Endothelial cell of umbilical vein (primary cell): ENCODE measurements at regions of chr16 and their contacts with region 1.

Region 1: DNA sequence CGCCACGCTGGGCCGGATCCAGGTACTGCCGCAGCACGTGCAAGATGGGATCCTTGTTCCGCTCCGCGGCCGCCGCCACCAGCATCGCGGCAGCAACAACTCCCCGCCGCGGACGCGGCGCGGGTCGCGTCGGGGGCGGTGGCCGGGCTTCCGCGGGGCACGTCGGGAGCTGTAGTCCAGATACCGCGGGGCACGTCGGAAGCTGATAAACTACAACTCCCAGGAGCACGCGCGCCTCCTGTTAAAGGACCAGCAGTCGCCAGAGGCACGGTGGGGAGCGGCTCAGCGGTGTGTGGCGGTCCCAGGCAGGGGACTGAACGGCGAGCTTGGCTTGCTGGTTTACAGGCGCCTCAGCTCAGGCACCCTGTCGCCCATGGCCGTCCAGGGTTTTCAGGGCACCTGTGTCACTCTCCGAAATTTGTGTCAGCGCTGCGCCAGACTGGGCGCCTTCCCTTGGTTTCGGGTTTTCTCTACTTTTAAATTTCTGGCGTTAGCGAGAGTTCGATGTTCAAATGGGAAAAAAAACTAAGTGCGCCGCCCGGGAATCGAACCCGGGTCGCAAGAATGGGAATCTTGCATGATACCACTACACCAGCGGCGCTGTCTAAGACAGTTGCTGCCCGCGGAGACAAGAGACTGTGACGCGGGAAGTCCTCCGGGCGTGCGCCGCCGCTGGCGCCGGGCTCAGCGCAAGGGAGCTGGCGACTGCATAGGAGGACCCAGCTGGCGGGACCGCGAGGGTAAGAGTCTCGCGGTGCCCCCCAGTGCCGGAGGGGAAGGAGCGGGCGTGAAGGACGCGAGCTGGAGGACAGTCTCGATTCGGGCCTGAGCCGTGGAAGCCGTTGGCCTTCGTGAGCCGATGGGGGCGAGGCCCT is at the start of gene METTL26:
- DNase-seq: peak; percentile 93
- H3K4me3 ChIP-seq: peak within 1 kb of the TSS; percentile 37 to 82 (median 61)
- H3K27ac ChIP-seq: peak within 1 kb of the TSS; percentile 68
- H3K4me1 ChIP-seq: peaks cover 9% of the 10 kb centered on the region
- H3K27me3 ChIP-seq: no peaks in the 10 kb centered on the region
- CTCF ChIP-seq: no peak
- POLR2A ChIP-seq: peak; percentile 95
- total RNA-seq, gene METTL26: 112 and 114 TPM in 2 replicates

Region 2: GRCh38 chr16:648781-649589 is 12.5 kb after region 1 on chr16 and contains the start of gene WDR90:
- CTCF ChIA-PET with region 1: interaction called, 8 read pairs
- POLR2A ChIA-PET with region 1: interaction called, 4 read pairs
- dilution Hi-C with region 1: no loop called
- intact Hi-C with region 1: loop called (anchors 1 kb)
- DNase-seq: peak; percentile 89
- H3K4me3 ChIP-seq: peak within 1 kb of the TSS; percentile 13 to 57 (median 55)
- H3K27ac ChIP-seq: peak within 1 kb of the TSS; percentile 69
- H3K4me1 ChIP-seq: peaks cover 8% of the 10 kb centered on the region
- H3K27me3 ChIP-seq: no peaks in the 10 kb centered on the region
- CTCF ChIP-seq: no peak
- POLR2A ChIP-seq: peak; percentile 61
- total RNA-seq, gene WDR90: 50.0 and 51.8 TPM in 2 replicates